MCF 10A (cell line): ENCODE measurements at regions of chr9 and their contacts with region 1.

Region 1: DNA sequence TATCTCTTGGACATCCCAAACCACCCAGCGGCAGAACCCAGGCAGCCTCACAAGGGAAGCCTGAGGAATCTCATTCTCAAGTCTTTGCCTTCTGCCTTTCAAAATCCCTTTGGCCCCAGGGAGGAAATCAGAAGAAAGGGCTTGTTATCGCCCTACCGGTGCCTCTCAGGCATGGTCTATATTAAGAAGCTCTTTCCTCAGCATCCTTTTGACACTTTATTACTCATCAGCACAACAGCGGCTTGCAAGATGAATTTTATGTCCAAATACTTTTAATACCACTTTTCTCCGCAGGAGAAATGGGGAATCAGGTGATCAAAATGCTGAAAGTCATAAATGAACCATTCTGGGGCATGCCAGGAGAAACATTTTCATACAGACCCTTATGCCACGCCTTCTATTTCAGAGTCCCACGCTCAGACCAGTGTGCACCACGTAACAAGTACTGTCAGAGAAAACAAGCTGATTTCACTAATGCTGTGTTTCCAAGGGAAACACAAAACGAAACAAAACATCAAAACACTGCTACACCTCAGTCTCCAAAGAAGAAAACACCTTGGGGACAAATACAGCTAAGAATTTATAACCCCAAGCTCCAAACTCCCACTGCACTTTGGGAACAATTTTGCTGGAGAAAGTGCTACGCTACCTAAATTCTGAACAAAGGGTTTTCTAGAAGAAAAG is 30.0 kb downstream of the RAPGEF1 start:
- DNase-seq: peak; percentile 17
- H3K4me3 Mint-ChIP-seq: no peak overlapping the region
- H3K27ac Mint-ChIP-seq: peak overlapping the region; percentile 67
- H3K4me1 Mint-ChIP-seq: peaks cover 38% of the 10 kb centered on the region
- H3K27me3 Mint-ChIP-seq: no peaks in the 10 kb centered on the region
- CTCF ChIP-seq: no peak

Region 2: GRCh38 chr9:131650254-131650653 is 59.7 kb before region 1 on chr9:
- CTCF ChIA-PET with region 1: interaction called, 3 read pairs
- POLR2A ChIA-PET with region 1: interaction called, 34 read pairs
- intact Hi-C with region 1: loop called (anchors 1 kb)
- DNase-seq: peak; percentile 83
- H3K4me3 Mint-ChIP-seq: peak overlapping the region; percentile 71
- H3K27ac Mint-ChIP-seq: peak overlapping the region; percentile 99
- H3K4me1 Mint-ChIP-seq: peaks cover 26% of the 10 kb centered on the region
- H3K27me3 Mint-ChIP-seq: no peaks in the 10 kb centered on the region
- CTCF ChIP-seq: no peak

Region 3: GRCh38 chr9:131656356-131657036 is 53.4 kb before region 1 on chr9:
- CTCF ChIA-PET with region 1: interaction called, 3 read pairs
- POLR2A ChIA-PET with region 1: interaction called, 34 read pairs
- intact Hi-C with region 1: no loop called
- DNase-seq: no peak
- H3K4me3 Mint-ChIP-seq: no peak overlapping the region
- H3K27ac Mint-ChIP-seq: peak overlapping the region; percentile 7
- H3K4me1 Mint-ChIP-seq: peaks cover 36% of the 10 kb centered on the region
- H3K27me3 Mint-ChIP-seq: no peaks in the 10 kb centered on the region
- CTCF ChIP-seq: no peak

Region 4: GRCh38 chr9:131697097-131697496 is 12.8 kb before region 1 on chr9:
- CTCF ChIA-PET with region 1: interaction called, 6 read pairs
- POLR2A ChIA-PET with region 1: interaction called, 12 read pairs
- intact Hi-C with region 1: no loop called
- DNase-seq: no peak
- H3K4me3 Mint-ChIP-seq: no peak overlapping the region
- H3K27ac Mint-ChIP-seq: no peak overlapping the region
- H3K4me1 Mint-ChIP-seq: peaks cover 24% of the 10 kb centered on the region
- H3K27me3 Mint-ChIP-seq: no peaks in the 10 kb centered on the region
- CTCF ChIP-seq: no peak